Dendritic cell treated with granulocyte-macrophage colony-stimulating factor and Interleukin-4, amounts not matched to agents 40 ng/mL and 50 ng/mL, for 4 days (primary cell): ENCODE measurements at regions of chr18 and their contacts with region 1.

Region 1: DNA sequence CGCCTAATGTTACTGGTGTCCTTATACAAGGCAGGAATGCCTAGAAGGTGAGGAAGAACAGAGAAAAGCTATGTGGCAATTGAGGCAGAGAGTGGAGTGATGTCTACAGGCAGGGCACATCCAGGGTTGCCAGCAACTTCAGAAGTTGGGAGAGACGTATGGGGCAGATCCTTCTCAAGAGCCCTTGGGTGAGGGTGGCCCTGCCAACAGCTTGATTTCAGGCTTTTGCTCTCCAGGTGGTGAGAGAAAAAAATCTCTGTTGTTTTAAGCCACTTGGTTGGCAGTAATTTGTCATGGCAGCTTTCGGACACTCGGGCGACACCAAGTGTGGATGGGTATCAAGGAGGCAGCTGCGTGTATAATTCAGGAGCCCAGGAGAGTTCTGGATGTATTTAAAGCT is 217.4 kb upstream of the SMIM21 start:
- H3K4me3 Mint-ChIP-seq: no peak overlapping the region
- H3K27ac Mint-ChIP-seq: no peak overlapping the region
- H3K4me1 Mint-ChIP-seq: no peaks in the 10 kb centered on the region
- H3K27me3 Mint-ChIP-seq: no peaks in the 10 kb centered on the region

Region 2: DNA sequence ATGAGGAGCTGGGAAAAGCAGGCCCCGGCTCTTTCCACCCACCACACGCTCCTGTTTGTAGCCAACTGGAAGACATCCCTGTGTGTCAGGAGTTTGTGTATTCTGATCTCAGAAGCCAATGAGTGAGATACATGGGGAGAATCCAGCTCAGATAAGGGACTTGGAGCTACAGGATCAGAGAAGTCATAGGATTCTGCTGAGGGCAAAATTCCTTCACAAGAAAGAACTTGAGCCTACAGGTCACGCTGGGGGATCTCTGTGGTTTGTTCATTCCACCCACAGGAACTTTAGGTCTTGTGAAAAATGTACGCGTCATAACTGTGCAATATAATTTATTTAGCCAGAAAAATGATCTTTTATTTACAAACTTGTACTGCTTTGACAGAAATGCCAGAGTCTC is 137.2 kb before region 1 on chr18:
- intact Hi-C with region 1: loop called (anchors 5 kb)
- H3K4me3 Mint-ChIP-seq: no peak overlapping the region
- H3K27ac Mint-ChIP-seq: no peak overlapping the region
- H3K4me1 Mint-ChIP-seq: no peaks in the 10 kb centered on the region
- H3K27me3 Mint-ChIP-seq: no peaks in the 10 kb centered on the region